ENCODE measurements at regions of chr7 and their contacts with region 1.

Region 1: DNA sequence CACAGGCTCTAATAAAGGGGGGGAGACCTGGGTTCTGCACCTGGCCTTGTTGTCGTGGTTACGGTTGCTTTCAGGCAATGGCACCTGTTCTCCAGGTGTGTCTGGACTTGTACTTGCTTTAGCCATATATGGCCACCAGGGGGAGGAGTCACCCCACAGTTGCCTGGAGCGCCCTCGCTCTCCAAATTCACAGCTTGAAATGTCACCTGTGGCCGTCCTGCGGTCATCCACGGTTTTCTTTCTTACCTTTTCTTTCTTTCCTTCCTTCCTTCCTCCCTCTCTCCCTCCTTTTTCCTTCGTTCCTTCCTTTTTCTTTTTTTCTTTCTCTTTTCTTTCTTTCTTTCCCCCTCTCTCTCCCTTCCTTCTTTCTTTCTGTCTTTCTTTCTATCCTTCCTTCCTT is 157.2 kb upstream of the ZNF92 start:
- DNase-seq: peak; percentile 20
- H3K4me3 ChIP-seq: no peak overlapping the region
- H3K27ac ChIP-seq: no peak overlapping the region
- H3K4me1 ChIP-seq: no peaks in the 10 kb centered on the region
- H3K27me3 ChIP-seq: no peaks in the 10 kb centered on the region
- CTCF ChIP-seq: peak; percentile 80
- EP300 ChIP-seq: no peak
- RAD21 ChIP-seq: peak; percentile 90

Region 2: DNA sequence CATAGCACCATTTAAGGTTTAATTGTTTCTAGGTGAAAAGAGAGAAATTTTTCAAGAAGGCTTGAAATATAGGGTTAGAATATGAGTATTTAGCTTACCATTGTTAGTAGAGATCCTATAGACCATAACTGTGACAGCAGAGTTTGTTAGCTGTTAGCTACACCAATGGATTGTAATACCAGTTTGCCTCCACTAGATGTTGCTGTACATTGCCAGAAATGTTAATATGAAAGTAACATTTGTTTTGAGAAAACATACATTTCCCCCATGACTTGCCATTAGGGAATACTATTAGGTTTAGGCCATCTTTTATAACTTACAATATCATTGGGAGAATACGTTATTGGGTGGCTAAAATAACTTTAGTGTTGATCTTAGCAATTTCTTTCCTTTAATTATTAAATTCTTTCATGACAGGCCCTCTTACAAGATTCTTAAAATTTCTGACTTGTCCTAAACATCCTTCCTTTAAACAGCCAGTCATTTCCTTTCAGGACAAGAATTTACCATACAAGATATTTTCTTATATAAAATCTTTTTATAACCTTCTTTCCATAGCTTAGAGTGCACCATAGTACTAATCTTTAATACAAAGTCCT is 265.1 kb before region 1 on chr7:
- CTCF ChIA-PET with region 1: interaction called, 10 read pairs
- POLR2A ChIA-PET with region 1: no interaction called
- DNase-seq: peak; percentile 66
- H3K4me3 ChIP-seq: no peak overlapping the region; a peak in 1 of 4 replicates
- H3K27ac ChIP-seq: no peak overlapping the region
- H3K4me1 ChIP-seq: peaks cover 0 to 18% of the 10 kb centered on the region in 2 experiments; a peak in 2 of 4 replicates
- H3K27me3 ChIP-seq: peaks cover 18% of the 10 kb centered on the region
- CTCF ChIP-seq: peak; percentile 96
- EP300 ChIP-seq: no peak
- RAD21 ChIP-seq: peak; percentile 95

Region 3: DNA sequence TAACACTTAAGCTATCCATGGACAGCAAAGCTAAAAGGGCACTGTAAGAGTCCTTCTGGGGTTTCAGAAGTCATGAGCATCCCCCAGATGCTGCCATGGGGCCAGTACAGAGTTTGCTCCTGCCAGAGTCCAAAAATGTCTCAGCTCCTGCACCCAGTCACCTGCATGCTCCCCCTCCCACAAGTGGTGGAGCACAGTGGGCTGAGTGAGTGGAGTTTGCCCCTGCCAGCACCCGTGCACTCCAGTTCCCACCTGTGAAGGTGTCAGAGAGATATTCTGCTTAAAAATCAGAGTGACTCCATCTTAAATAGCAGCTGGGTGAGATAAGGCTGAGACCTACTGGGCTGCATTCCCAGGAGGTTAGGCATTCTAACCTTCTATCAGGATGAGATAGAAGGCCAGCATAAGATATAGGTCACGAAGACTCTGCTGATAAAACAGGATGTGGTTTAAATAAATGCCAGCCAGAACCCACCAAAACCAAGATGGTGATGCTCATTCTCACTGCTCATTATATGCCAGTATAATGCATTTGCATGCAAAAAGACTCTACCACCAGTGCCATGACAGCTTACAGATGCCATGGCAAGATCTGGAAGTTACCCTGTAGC is 17.1 kb after region 1 on chr7:
- CTCF ChIA-PET with region 1: interaction called, 18 read pairs
- POLR2A ChIA-PET with region 1: no interaction called
- DNase-seq: no peak
- H3K4me3 ChIP-seq: no peak overlapping the region
- H3K27ac ChIP-seq: no peak overlapping the region
- H3K4me1 ChIP-seq: peaks cover 0 to 14% of the 10 kb centered on the region in 2 experiments; a peak in 2 of 4 replicates
- H3K27me3 ChIP-seq: no peaks in the 10 kb centered on the region
- CTCF ChIP-seq: no peak
- EP300 ChIP-seq: no peak
- RAD21 ChIP-seq: no peak

Region 4: GRCh38 chr7:65239707-65240352 is 23.4 kb after region 1 on chr7:
- CTCF ChIA-PET with region 1: interaction called, 12 read pairs
- POLR2A ChIA-PET with region 1: no interaction called
- DNase-seq: peak; percentile 98
- H3K4me3 ChIP-seq: peak overlapping the region; percentile 57 to 75
- H3K27ac ChIP-seq: peak overlapping the region in 1 of 2 experiments; percentile 71; a peak in 2 of 4 replicates
- H3K4me1 ChIP-seq: peaks cover 0 to 22% of the 10 kb centered on the region in 2 experiments; a peak in 2 of 4 replicates
- H3K27me3 ChIP-seq: peaks cover 6% of the 10 kb centered on the region; the same call in 1 of the 2 replicates
- CTCF ChIP-seq: no peak
- EP300 ChIP-seq: no peak
- RAD21 ChIP-seq: no peak

Region 5: DNA sequence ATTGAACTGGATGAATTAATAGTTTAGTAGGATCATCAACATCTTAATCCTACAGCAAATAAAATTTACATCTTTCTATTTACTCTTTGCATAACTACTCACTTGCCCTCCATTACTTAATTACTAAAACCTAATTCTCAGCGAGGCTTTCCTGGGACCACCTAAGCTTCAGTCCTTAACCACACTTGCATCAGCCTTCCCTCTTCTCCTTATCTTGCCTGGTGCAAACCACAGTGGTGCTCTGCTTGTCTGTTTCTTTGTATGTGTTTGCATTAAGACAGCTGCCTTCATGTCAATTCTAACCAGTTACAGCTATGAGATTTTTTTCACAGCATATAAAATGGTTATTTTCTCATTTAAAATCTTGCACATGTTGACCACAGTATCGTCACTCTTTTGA is 84.5 kb after region 1 on chr7:
- CTCF ChIA-PET with region 1: interaction called, 181 read pairs
- POLR2A ChIA-PET with region 1: no interaction called
- DNase-seq: no peak
- H3K4me3 ChIP-seq: no peak overlapping the region
- H3K27ac ChIP-seq: no peak overlapping the region
- H3K4me1 ChIP-seq: peaks cover 0 to 12% of the 10 kb centered on the region in 2 experiments; a peak in 2 of 4 replicates
- H3K27me3 ChIP-seq: no peaks in the 10 kb centered on the region
- CTCF ChIP-seq: no peak
- EP300 ChIP-seq: no peak
- RAD21 ChIP-seq: no peak